ENCODE measurements at regions of chr5 and their contacts with region 1.

Region 1: DNA sequence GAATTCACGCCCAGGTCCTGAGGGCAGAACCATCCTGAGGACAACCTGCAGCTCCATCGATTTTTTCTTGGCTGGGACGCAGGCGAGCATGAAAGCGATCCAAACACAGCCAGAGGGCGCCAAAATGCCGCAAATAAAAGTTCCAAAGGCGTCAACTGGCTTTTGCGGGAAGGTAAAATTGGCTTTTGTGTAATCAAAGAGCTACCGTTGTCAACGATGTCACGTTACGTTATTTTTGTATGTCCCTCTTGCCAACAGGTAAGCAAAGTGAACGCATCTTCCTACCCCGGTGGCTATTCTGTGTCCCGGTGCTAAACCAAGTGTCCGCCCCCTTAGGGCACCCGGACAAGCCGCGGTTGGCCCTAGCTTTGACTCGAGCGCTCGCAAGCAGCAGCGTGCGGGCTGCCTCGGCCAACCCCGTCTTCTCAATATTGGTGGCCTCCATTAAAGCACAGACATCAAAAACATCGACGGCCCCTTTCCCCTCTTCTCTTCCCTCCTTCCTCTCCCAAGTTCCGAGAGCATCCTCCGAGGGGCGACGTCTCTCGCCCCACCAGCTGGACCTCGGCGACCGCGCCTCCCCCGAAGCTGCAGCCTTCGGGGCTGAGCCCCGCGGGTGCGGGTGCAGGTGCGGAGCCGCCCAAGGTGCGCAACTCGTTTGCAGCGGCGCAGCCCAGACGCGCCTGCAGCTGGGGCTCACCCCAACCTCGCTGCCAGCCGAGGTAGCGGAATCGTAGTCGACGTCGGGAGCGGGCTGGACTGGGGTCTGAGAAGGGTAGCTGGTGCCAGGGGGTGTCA is 1.1 kb upstream of the BASP1 start:
- DNase-seq: peak; percentile 87
- H3K4me3 ChIP-seq: peak overlapping the region; percentile 45 to 87 (median 63)
- H3K27ac ChIP-seq: no peak overlapping the region
- H3K4me1 ChIP-seq: peaks cover 24% of the 10 kb centered on the region
- H3K27me3 ChIP-seq: peaks cover 5 to 10% of the 10 kb centered on the region in 2 experiments
- CTCF ChIP-seq: peak; percentile 74 to 87
- POLR2A ChIP-seq: no peak

Region 2: DNA sequence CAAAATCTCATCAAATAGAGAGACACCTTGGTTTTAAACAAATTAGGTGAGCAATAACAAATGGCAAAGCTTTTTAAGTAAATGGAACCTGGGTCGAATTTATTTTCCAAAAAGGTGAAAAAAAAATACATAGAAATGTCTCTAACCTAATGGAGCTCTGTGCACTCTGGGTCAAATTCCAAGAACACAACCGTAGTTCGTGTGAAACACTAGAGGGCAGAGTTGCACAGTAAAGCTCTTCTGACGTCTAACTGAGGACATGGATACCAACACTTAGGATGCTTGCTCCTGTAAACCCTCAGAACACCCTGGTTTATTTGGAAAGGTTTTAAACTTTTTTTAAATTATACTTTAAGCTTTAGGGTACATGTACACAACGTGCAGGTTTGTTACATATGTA is 1055.7 kb before region 1 on chr5:
- CTCF ChIA-PET with region 1: interaction called, 16 read pairs
- POLR2A ChIA-PET with region 1: no interaction called
- dilution Hi-C with region 1: no loop called
- intact Hi-C with region 1: no loop called
- DNase-seq: peak; percentile 47
- H3K4me3 ChIP-seq: no peak overlapping the region
- H3K27ac ChIP-seq: no peak overlapping the region
- H3K4me1 ChIP-seq: no peaks in the 10 kb centered on the region
- H3K27me3 ChIP-seq: no peaks in the 10 kb centered on the region
- CTCF ChIP-seq: peak; percentile 57 to 67
- POLR2A ChIP-seq: no peak

Region 3: GRCh38 chr5:17096952-17097695 is 119.3 kb before region 1 on chr5:
- CTCF ChIA-PET with region 1: no interaction called
- POLR2A ChIA-PET with region 1: no interaction called
- dilution Hi-C with region 1: no loop called
- intact Hi-C with region 1: no loop called
- DNase-seq: no peak
- H3K4me3 ChIP-seq: no peak overlapping the region
- H3K27ac ChIP-seq: no peak overlapping the region
- H3K4me1 ChIP-seq: no peaks in the 10 kb centered on the region
- H3K27me3 ChIP-seq: no peaks in the 10 kb centered on the region
- CTCF ChIP-seq: no peak
- POLR2A ChIP-seq: no peak

Region 4: DNA sequence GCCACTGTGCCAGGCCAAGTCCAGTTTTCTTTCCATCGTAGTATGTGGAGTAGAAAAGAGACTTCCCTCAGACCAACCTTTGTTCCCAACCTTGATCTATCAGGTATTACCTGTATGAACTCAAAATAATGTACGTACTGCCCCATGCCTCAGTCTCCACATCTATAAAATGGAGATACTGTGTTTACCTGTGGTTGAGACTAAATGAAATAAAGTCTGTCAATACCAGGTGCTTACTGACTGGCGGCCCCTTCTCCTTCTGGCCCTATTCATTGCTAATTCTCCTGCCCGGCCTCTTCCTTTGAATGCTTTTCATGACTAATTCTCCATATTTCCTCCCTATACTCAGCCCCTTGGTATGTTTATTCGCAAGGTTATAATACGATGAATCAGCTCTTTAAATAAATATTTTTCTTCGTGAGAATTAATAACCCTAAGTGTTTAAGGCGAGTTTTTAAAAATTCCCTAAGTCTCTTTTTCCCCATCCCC is 88.6 kb before region 1 on chr5:
- CTCF ChIA-PET with region 1: no interaction called
- POLR2A ChIA-PET with region 1: no interaction called
- dilution Hi-C with region 1: no loop called
- intact Hi-C with region 1: no loop called
- DNase-seq: peak; percentile 94
- H3K4me3 ChIP-seq: no peak overlapping the region
- H3K27ac ChIP-seq: peak overlapping the region; percentile 81
- H3K4me1 ChIP-seq: peaks cover 34% of the 10 kb centered on the region
- H3K27me3 ChIP-seq: no peaks in the 10 kb centered on the region
- CTCF ChIP-seq: no peak
- POLR2A ChIP-seq: no peak

Region 5: GRCh38 chr5:17238521-17239041 is 22.2 kb after region 1 on chr5:
- CTCF ChIA-PET with region 1: interaction called, 16 read pairs
- POLR2A ChIA-PET with region 1: interaction called, 8 read pairs
- dilution Hi-C with region 1: no loop called
- intact Hi-C with region 1: loop called (anchors 1 kb)
- DNase-seq: peak; percentile 72
- H3K4me3 ChIP-seq: peak overlapping the region in 1 of 3 experiments; percentile 28
- H3K27ac ChIP-seq: peak overlapping the region; percentile 77
- H3K4me1 ChIP-seq: peaks cover 34% of the 10 kb centered on the region
- H3K27me3 ChIP-seq: no peaks in the 10 kb centered on the region
- CTCF ChIP-seq: no peak
- POLR2A ChIP-seq: no peak

Region 6: GRCh38 chr5:17255471-17256021 is 39.2 kb after region 1 on chr5:
- CTCF ChIA-PET with region 1: interaction called, 14 read pairs
- POLR2A ChIA-PET with region 1: interaction called, 5 read pairs
- dilution Hi-C with region 1: no loop called
- intact Hi-C with region 1: loop called (anchors 1 kb)
- DNase-seq: no peak
- H3K4me3 ChIP-seq: no peak overlapping the region
- H3K27ac ChIP-seq: no peak overlapping the region
- H3K4me1 ChIP-seq: peaks cover 42% of the 10 kb centered on the region
- H3K27me3 ChIP-seq: no peaks in the 10 kb centered on the region
- CTCF ChIP-seq: no peak
- POLR2A ChIP-seq: no peak

Region 7: GRCh38 chr5:17305964-17306716 is 89.8 kb after region 1 on chr5:
- CTCF ChIA-PET with region 1: interaction called, 14 read pairs
- POLR2A ChIA-PET with region 1: no interaction called
- dilution Hi-C with region 1: no loop called
- intact Hi-C with region 1: no loop called
- DNase-seq: peak; percentile 63
- H3K4me3 ChIP-seq: no peak overlapping the region
- H3K27ac ChIP-seq: no peak overlapping the region
- H3K4me1 ChIP-seq: peaks cover 2% of the 10 kb centered on the region
- H3K27me3 ChIP-seq: no peaks in the 10 kb centered on the region
- CTCF ChIP-seq: no peak
- POLR2A ChIP-seq: no peak

Region 8: GRCh38 chr5:17436761-17437221 is 220.4 kb after region 1 on chr5:
- CTCF ChIA-PET with region 1: interaction called, 9 read pairs
- POLR2A ChIA-PET with region 1: no interaction called
- dilution Hi-C with region 1: no loop called
- intact Hi-C with region 1: loop called (anchors 2 kb)
- DNase-seq: peak; percentile 81
- H3K4me3 ChIP-seq: peak overlapping the region in 2 of 3 experiments; percentile 8 to 21
- H3K27ac ChIP-seq: no peak overlapping the region
- H3K4me1 ChIP-seq: peaks cover 7% of the 10 kb centered on the region
- H3K27me3 ChIP-seq: no peaks in the 10 kb centered on the region
- CTCF ChIP-seq: no peak
- POLR2A ChIP-seq: no peak

Region 9: DNA sequence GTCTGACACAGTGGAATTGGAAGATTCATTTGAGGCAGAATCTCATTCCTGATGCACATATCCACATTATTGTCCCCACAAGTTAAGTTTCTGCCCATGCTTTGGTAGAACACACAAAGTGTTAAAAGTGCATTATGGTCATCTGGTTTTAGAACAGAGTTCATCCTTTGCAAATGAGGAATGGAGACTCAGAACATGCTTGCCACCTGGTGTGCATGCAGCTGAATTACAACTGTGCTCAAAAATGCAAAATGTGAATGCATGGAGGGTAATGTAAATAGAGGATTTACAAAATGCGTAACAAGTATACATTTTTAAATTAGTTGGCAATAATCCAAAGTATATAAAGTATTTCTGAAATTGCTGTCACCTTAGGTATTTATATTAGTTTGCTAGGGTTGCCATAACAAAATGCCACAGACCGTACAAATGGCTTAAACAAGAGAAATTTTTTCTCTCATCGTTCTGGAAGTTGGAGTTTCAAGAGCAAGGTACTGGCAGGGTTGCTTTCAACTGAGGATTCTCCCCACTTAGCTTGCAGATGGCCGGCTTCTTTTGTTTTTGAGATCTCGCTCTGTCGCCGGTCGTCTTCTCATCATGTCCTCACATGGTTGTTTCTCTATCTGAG is 1089.0 kb after region 1 on chr5:
- CTCF ChIA-PET with region 1: interaction called, 333 read pairs
- POLR2A ChIA-PET with region 1: interaction called, 8 read pairs
- dilution Hi-C with region 1: no loop called
- intact Hi-C with region 1: loop called (anchors 1 kb)
- DNase-seq: peak; percentile 49
- H3K4me3 ChIP-seq: no peak overlapping the region
- H3K27ac ChIP-seq: no peak overlapping the region
- H3K4me1 ChIP-seq: no peaks in the 10 kb centered on the region
- H3K27me3 ChIP-seq: no peaks in the 10 kb centered on the region
- CTCF ChIP-seq: peak; percentile 53 to 59
- POLR2A ChIP-seq: no peak

Measured in endothelial cell of umbilical vein (primary cell).